ENCODE measurements at regions of chr2 and their contacts with region 1.

Region 1: GRCh38 chr2:28665041-28665704 is 86.5 kb upstream of the PPP1CB start:
- DNase-seq: no peak
- H3K4me3 ChIP-seq: no peak overlapping the region
- H3K27ac ChIP-seq: no peak overlapping the region
- H3K4me1 ChIP-seq: no peaks in the 10 kb centered on the region
- H3K27me3 ChIP-seq: no peaks in the 10 kb centered on the region

Region 2: DNA sequence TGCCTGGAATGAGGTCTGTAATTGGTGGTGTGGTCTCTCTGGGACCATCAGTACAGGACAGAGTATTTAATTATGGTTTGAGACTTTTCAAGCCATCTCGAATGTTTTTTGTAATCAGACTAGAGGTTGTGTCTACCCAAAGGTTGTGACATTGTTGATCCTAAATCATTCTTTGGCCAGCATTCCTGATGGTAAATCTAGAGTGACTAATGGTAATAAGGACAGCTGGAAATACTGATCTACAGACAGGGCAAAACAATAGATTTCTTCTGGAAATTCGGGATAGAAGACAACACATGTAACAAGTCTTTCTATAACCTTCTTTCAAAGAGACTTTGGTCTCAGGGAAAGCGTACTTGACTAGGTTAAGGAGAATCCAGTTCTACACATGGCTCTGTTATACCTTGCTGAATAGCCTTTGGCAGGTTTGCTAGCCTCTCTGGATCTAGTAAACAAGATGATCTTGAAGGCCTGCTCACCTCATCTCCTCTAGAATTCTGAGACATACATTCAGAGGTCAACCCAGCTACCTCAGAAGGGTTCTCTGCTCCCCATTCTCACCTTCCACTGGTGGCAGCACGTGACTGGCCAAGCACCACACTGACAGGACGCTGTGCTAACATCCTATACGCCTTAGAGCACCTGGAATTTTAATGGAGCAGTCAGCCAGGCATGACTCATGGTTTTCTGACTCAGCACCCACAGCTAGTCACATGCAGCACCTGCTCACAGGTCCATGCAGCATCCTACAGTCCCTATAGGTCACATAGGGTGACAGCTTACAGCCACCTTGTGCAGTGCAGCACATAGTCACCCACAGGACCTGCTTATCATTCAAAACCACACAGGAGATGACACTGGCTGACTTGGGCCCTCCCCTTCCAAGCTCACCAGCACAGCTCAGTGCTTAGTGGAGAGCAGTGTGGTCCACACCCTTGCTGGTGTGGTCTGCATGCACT is 157.1 kb before region 1 on chr2:
- CTCF ChIA-PET with region 1: no interaction called
- POLR2A ChIA-PET with region 1: no interaction called
- DNase-seq: peak in 2 of 3 donors; percentile 13 to 50
- H3K4me3 ChIP-seq: no peak overlapping the region
- H3K27ac ChIP-seq: no peak overlapping the region
- H3K4me1 ChIP-seq: no peaks in the 10 kb centered on the region
- H3K27me3 ChIP-seq: peaks cover 0 to 6% (median 0%) of the 10 kb centered on the region in 5 experiments

Region 3: DNA sequence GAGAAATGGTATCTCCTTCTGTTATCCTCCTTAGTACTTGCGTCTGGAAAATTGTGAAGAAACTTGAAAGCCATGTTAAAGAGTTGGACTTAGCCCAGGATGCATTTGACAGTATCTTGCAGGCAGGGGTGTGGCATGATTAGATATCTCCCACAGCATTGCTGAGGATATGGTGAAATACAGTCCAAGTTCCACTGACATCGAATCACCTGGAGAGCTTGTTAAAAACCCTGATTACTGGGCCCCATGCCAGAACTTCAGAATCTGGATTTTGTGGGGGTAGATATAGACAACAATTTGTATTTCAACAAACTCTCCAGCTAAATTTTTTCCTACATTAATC is 10.2 kb before region 1 on chr2:
- CTCF ChIA-PET with region 1: interaction called, 15 read pairs
- POLR2A ChIA-PET with region 1: no interaction called
- DNase-seq: no peak
- H3K4me3 ChIP-seq: no peak overlapping the region
- H3K27ac ChIP-seq: no peak overlapping the region
- H3K4me1 ChIP-seq: no peaks in the 10 kb centered on the region
- H3K27me3 ChIP-seq: no peaks in the 10 kb centered on the region

Region 4: GRCh38 chr2:28695245-28695647 is 30.1 kb after region 1 on chr2:
- CTCF ChIA-PET with region 1: no interaction called
- POLR2A ChIA-PET with region 1: no interaction called
- DNase-seq: peak in 2 of 3 donors; percentile 21 to 33
- H3K4me3 ChIP-seq: no peak overlapping the region
- H3K27ac ChIP-seq: no peak overlapping the region
- H3K4me1 ChIP-seq: peaks cover 0 to 6% (median 1%) of the 10 kb centered on the region in 4 experiments
- H3K27me3 ChIP-seq: no peaks in the 10 kb centered on the region